HEK293 (cell line): ENCODE measurements at regions of chr1 and their contacts with region 1.

Region 1: GRCh38 chr1:182662121-182662890 is 22.1 kb downstream of the RGS8 start:
- H3K4me3 ChIP-seq: no peak overlapping the region
- H3K27ac ChIP-seq: no peak overlapping the region
- H3K4me1 ChIP-seq: no peaks in the 10 kb centered on the region
- CTCF ChIP-seq: no peak

Region 2: GRCh38 chr1:182643706-182644105 is 18.6 kb before region 1 on chr1:
- CTCF ChIA-PET with region 1: no interaction called
- POLR2A ChIA-PET with region 1: no interaction called
- H3K4me3 ChIP-seq: no peak overlapping the region
- H3K27ac ChIP-seq: no peak overlapping the region
- H3K4me1 ChIP-seq: no peaks in the 10 kb centered on the region
- CTCF ChIP-seq: no peak

Region 3: DNA sequence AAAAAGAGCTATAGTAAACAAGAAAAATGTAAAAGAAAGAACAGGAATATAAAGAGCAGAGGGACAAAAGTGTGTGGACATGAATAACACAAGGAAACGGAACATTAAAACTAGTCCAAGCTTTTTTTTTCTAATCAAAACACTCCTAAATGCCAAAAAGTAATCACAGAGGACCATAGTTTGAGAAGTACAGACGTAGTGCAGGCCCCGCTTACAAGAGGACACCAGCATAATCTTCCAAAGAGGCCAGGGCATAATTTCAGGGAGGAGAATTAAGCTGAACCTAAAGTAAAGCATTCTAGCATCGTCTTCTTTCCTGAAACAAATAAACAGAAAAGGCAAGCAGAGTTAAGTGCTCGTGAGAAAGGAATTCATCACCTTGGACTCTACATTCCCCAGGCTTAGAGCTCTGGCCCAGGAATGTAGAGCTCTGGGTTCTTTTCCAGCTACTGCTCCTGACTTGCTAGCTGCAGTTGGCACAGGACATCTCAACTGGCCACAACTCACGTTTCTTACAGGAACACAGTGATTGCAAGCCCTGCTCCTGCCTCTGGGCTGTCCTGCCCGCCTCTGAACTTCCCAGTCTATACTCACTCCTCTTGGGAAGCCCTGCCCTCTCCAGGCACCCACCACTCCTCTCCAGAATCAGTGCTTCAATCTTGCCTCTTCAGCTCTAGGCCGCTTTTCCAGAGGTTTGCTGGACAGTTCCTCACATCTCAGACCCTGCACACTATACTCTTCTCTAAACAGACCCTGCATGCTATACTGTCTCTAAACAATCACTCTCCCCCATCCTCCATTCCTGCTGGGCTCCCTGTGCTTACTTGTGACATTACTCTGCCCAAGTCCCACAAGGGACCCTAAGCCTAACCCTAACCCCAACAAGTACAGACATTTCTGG is 12.3 kb after region 1 on chr1:
- CTCF ChIA-PET with region 1: interaction called, 13 read pairs
- POLR2A ChIA-PET with region 1: no interaction called
- H3K4me3 ChIP-seq: no peak overlapping the region
- H3K27ac ChIP-seq: no peak overlapping the region
- H3K4me1 ChIP-seq: no peaks in the 10 kb centered on the region
- CTCF ChIP-seq: peak; percentile 35; the same call in 1 of the 2 replicates